Naive thymus-derived CD8-positive, alpha-beta T cell (primary cell): ENCODE measurements at regions of chr11 and their contacts with region 1.

Region 1: DNA sequence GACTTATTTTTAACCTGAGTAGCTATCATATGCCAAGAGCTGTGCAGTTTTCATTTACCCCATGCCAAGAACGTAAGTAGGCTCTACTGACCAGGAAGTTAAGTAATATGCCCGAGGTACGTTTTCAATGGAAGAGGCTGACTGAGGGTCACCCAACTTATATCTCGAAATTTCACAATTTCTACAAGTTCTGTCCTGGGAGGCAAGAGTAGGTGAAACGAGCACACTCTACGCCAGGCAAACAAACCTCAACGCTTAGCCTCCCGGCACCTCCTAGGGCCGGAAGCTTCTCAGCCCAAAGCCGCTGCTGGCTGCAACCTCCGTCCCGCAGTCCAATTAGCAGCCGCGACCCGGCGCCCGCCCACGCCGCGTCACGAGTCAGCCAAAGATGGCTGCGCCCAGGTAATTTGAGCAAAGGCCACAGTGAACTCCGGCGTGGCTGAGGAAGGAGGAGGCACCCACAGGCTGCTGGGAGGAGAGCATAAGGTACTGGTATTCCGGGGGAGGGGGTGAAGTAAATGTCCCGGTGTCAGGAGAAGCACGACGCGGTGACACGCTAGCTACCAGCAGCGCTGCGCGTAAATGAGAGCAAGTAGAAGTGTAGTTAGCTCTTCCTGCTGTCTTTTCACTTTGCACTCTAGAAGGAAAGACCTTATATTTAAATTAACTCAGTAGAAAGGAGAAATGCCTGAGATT is at the start of gene TMEM126A:
- DNase-seq: peak; percentile 81 to 93 (median 88)
- ATAC-seq: peak; percentile 98
- H3K4me3 Mint-ChIP-seq: peak within 1 kb of the TSS; percentile 90 to 100 (median 98)
- H3K27ac Mint-ChIP-seq: peak within 1 kb of the TSS; percentile 96 to 99 (median 98)
- H3K4me1 Mint-ChIP-seq: peaks cover 15 to 39% (median 38%) of the 10 kb centered on the region in 4 donors
- H3K27me3 Mint-ChIP-seq: peaks cover 3 to 27% (median 13%) of the 10 kb centered on the region in 5 donors
- polyA plus RNA-seq, gene TMEM126A: 68.0 to 97.7 (median 75.4) TPM

Region 2: DNA sequence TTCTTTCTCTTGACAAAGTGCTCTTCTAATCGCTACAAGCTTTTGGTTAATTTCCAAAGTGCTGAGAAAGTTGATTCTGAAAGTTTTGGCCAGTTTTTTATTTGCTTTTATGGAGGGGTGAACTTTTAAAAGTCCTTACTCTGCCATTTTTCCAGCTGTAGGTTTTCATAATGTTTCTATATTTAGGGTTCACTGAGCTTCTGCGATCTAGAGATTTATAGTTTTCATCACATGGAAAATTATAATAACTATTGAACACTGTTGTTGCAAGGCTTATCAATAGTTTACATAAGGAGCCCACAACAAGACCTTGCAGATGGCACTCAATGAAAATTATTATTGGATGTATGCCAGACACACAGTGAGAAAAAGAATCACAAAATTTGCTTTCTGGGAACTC is 75.7 kb before region 1 on chr11:
- POLR2A ChIA-PET with region 1: no interaction called
- DNase-seq: no peak
- ATAC-seq: no peak
- H3K4me3 Mint-ChIP-seq: no peak overlapping the region
- H3K27ac Mint-ChIP-seq: no peak overlapping the region
- H3K4me1 Mint-ChIP-seq: no peaks in the 10 kb centered on the region
- H3K27me3 Mint-ChIP-seq: peaks cover 9 to 34% (median 16%) of the 10 kb centered on the region in 5 donors

Region 3: DNA sequence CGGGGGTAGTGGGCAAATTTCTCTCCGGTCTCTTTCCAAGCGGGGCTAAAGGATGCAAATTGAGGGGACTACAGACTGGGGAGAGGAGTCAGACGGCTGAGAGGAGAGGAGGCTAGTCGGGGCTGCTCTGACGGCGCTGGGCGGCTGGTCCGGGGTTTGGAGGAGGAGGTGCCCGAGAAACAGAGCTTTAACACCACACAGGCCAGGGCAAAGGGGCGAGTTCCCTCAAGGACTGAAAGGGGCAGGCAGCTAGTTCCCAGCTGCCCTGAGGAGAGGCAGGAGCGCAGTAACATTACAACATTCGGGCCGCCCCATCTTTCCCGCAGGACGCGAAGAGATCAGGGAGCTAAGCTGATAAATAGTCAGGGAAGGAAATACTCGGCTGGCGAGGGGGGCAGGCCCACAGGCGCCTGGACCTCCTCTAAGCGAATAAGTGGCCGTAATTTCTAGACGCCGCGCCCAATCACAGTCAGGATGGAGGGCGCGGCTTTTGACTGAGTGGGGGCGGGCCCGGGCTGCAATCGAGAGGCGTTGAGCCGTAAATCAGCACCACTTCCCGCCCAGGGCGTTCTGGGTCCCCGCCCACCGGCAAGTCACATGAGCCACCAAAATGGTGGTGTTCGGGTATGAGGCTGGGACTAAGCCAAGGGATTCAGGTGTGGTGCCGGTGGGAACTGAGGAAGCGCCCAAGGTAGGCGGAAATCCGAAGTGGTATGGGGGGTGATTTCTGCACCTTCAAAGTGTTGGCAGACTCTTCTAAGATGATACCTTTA is 19.6 kb before region 1 on chr11 and contains the start of gene TMEM126B:
- POLR2A ChIA-PET with region 1: interaction called, 27 read pairs
- DNase-seq: peak; percentile 88 to 96 (median 94)
- ATAC-seq: peak; percentile 96 to 97
- H3K4me3 Mint-ChIP-seq: peak within 1 kb of the TSS; percentile 89 to 100 (median 96)
- H3K27ac Mint-ChIP-seq: peak within 1 kb of the TSS; percentile 91 to 99 (median 96)
- H3K4me1 Mint-ChIP-seq: peaks cover 26 to 51% (median 49%) of the 10 kb centered on the region in 4 donors
- H3K27me3 Mint-ChIP-seq: peaks cover 0 to 2% (median 0%) of the 10 kb centered on the region in 5 donors
- polyA plus RNA-seq, gene TMEM126B: 51.1 to 64.3 (median 56.6) TPM

Region 4: DNA sequence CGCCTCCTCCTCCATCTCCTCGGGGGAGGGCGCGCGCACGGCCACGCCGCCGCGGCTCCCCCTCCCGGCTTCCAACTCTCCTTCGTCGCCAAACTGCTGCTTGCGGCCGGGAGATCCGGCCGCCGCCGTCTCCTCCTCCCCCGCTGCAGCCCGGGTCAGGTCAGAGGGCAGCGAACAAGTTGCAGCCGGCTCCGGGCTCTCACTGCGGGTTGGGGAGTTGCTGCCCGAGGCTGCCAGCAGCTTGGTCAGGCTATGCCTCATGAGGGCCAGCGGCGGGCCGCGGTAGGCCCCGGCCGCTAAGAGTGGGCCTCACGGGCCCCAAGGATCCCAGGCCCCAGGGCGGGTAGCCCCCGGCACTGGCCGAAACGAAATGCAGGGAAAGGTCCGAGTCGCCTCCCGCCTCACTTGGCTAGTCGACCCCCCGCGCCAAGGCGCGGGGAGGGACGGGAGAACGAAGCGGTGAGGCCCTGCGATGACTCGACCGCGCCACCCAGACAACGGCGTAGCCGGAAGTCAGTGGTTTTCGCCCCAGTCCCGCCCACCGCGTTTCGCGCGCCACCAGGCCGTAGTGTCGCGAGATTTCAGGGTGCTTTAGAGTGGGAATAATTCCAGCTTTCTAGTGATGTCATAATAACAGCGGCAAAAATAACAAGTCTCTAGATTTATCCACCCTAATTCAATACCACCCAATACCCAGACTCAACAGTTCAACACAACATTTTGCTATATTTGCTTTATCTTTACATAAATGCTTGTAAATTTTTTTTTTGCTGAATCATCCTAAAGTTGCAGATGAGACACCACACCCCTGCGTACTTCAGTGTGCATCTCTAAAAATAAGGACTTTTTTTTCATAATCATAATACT is 17.1 kb after region 1 on chr11 and contains the start of gene CREBZF:
- POLR2A ChIA-PET with region 1: interaction called, 98 read pairs
- DNase-seq: peak; percentile 80 to 95 (median 91)
- ATAC-seq: peak; percentile 68 to 70
- H3K4me3 Mint-ChIP-seq: peak within 1 kb of the TSS; percentile 97 to 100 (median 100)
- H3K27ac Mint-ChIP-seq: peak within 1 kb of the TSS; percentile 99 to 100 (median 100)
- H3K4me1 Mint-ChIP-seq: peaks cover 20 to 50% (median 44%) of the 10 kb centered on the region in 4 donors
- H3K27me3 Mint-ChIP-seq: no peaks in the 10 kb centered on the region
- polyA plus RNA-seq, gene CREBZF: 9.5 to 11.6 (median 11.1) TPM

Region 5: GRCh38 chr11:86244522-86245368 is 597.0 kb after region 1 on chr11 and contains the start of gene EED:
- POLR2A ChIA-PET with region 1: interaction called, 10 read pairs
- DNase-seq: peak; percentile 90 to 95 (median 93)
- ATAC-seq: peak; percentile 83 to 84
- H3K4me3 Mint-ChIP-seq: peak within 1 kb of the TSS in 1 of 10 donors; percentile 2
- H3K27ac Mint-ChIP-seq: no peak within 1 kb of the TSS
- H3K4me1 Mint-ChIP-seq: peaks cover 15 to 29% (median 25%) of the 10 kb centered on the region in 4 donors
- H3K27me3 Mint-ChIP-seq: peaks cover 0 to 6% (median 0%) of the 10 kb centered on the region in 5 donors
- polyA plus RNA-seq, gene EED: 10.9 to 19.2 (median 12.1) TPM